WTC11 (cell line): ENCODE measurements at regions of chr15 and their contacts with region 1.

Region 1: DNA sequence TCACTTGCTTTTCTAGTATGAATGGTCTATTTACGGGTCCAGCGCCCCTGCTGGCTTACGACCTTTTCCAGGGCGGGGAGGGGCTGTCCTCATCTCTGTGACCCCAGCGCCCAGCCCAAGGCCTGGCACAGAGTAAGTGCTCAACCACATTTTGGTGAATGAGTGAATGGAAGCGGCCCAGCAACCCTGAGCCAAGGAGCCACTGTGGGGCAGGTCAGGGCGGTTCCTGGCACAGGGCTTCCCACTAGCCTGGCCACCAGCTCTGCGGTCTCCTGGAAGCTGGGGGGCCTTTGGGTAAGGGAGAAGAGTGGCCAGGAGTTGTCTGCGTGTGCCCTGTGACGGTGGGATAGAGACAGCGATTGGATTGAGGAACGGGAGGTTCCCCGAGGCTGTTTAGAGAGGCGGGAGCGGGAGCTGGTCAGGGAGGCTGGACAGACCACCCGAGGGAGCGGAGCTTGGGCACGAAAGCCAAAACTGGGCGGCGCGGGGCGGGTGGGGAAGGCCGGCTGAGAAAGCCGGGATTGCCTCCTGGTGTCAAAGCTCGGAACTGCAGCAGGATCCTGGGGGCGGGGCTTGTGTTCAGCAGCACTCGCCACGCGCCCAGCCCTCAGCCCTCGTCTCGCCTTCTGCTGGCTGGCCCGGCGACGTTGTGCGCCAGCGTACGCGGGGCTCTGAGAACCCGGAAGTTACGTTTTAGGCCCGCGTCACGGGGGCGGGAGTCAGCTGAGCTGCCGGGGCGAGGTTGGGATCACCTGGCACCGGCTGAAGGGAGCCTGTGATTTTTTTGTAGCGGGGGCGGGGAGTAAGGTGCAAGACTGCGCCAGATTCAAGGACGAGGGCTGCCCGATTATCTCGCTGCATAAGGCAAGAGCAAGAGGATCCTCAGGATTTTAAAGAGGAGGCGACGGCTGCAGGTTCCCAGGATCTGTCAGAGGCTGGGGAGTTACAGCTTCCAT is at the start of gene VPS18:
- DNase-seq: peak; percentile 99
- ATAC-seq: peak; percentile 92
- H3K4me3 Mint-ChIP-seq: peak within 1 kb of the TSS; percentile 97
- H3K27ac Mint-ChIP-seq: peak within 1 kb of the TSS; percentile 99
- H3K4me1 Mint-ChIP-seq: peaks cover 13% of the 10 kb centered on the region
- H3K27me3 Mint-ChIP-seq: peaks cover 17% of the 10 kb centered on the region
- CTCF ChIP-seq: peak; percentile 96
- total RNA-seq, gene VPS18: 22.0 to 27.3 TPM (median 24.1 TPM) in 3 replicates

Region 2: DNA sequence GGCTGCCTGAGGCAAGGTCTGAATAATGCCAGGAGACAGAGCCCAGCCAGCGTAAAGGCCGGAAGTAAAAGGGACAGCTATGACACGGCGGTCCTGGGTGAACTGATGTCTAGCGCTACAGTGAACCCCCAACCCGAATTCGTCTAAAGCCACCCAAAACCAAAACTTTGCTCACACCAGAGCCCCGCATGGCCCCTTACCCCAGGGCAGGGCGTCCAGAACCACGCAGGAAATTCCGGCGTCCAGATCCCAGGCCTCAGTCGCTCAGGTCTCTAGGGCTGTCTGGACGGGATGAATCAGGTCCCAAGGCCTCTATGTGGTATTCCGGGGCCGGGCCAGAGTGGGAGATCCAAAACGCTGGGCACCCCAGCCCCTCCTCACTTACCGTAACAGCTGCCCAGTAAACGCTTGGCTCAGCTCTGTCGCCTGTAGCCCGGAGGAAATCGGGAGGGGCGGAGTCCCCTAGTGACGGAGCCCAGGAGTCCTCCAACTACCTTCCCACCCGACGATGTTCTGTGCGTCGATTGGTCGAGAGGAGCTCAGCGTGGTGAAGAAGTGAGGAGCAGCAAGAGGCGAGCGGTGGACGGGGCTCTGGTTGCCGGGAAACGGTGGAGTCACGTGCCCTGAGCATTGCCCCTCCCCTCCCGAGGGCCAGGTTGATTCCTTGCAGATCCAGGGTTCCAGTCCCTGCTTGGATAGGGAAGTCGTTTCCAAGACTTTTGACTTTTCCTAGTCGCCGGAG is 329.2 kb before region 1 on chr15 and contains the start of gene CCDC32:
- CTCF ChIA-PET with region 1: interaction called, 15 read pairs
- POLR2A ChIA-PET with region 1: no interaction called
- DNase-seq: peak; percentile 97
- ATAC-seq: peak; percentile 98
- H3K4me3 Mint-ChIP-seq: peak within 1 kb of the TSS; percentile 89
- H3K27ac Mint-ChIP-seq: peak within 1 kb of the TSS; percentile 92
- H3K4me1 Mint-ChIP-seq: peaks cover 23% of the 10 kb centered on the region
- H3K27me3 Mint-ChIP-seq: no peaks in the 10 kb centered on the region
- CTCF ChIP-seq: no peak
- total RNA-seq, gene CCDC32: 12.8 to 15.6 TPM (median 13.7 TPM) in 3 replicates

Region 3: GRCh38 chr15:40763801-40764732 is 129.9 kb before region 1 on chr15 and contains the start of gene GCHFR:
- CTCF ChIA-PET with region 1: interaction called, 35 read pairs
- POLR2A ChIA-PET with region 1: interaction called, 9 read pairs
- DNase-seq: peak; percentile 81
- ATAC-seq: peak; percentile 40
- H3K4me3 Mint-ChIP-seq: peak within 1 kb of the TSS; percentile 81
- H3K27ac Mint-ChIP-seq: peak within 1 kb of the TSS; percentile 94
- H3K4me1 Mint-ChIP-seq: peaks cover 31% of the 10 kb centered on the region
- H3K27me3 Mint-ChIP-seq: peaks cover 14% of the 10 kb centered on the region
- CTCF ChIP-seq: no peak
- total RNA-seq, gene GCHFR: 42.3 to 63.8 TPM (median 62.9 TPM) in 3 replicates

Region 4: DNA sequence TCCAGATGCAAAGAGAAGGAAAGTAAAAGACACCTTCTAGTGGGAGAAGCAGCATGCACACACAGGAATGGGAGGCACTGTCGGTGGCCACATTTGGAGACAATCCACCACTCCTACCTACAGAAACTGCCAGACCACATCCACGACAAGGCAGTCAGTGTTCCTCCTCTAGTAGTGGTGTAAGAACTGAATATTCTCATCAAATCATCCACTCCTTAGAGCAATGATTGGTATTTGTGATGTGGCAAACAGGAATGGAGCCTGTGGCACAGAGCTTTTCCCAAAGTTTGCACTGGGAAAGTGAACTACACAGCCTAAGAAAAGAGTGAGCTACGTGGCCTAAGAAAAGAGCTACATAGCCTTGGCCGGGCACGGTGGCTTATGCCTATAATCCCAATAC is 55.2 kb before region 1 on chr15:
- CTCF ChIA-PET with region 1: interaction called, 44 read pairs
- POLR2A ChIA-PET with region 1: interaction called, 15 read pairs
- DNase-seq: no peak
- ATAC-seq: no peak
- H3K4me3 Mint-ChIP-seq: no peak overlapping the region
- H3K27ac Mint-ChIP-seq: 0 out of 2 replicates have a peak overlapping the region, but pooled peaks have one; percentile 28
- H3K4me1 Mint-ChIP-seq: peaks cover 7% of the 10 kb centered on the region
- H3K27me3 Mint-ChIP-seq: no peaks in the 10 kb centered on the region; the same call in 1 of the 2 replicates
- CTCF ChIP-seq: no peak

Region 5: GRCh38 chr15:40863660-40864270 is 30.2 kb before region 1 on chr15:
- CTCF ChIA-PET with region 1: interaction called, 500 read pairs
- POLR2A ChIA-PET with region 1: interaction called, 11 read pairs
- DNase-seq: no peak
- ATAC-seq: no peak
- H3K4me3 Mint-ChIP-seq: no peak overlapping the region
- H3K27ac Mint-ChIP-seq: no peak overlapping the region
- H3K4me1 Mint-ChIP-seq: peaks cover 9% of the 10 kb centered on the region
- H3K27me3 Mint-ChIP-seq: no peaks in the 10 kb centered on the region; the same call in 1 of the 2 replicates
- CTCF ChIP-seq: no peak

Region 6: GRCh38 chr15:40906091-40906990 is 12.3 kb after region 1 on chr15:
- CTCF ChIA-PET with region 1: interaction called, 71 read pairs
- POLR2A ChIA-PET with region 1: interaction called, 3 read pairs
- DNase-seq: peak; percentile 95
- ATAC-seq: peak; percentile 82
- H3K4me3 Mint-ChIP-seq: peak overlapping the region; percentile 62
- H3K27ac Mint-ChIP-seq: no peak overlapping the region
- H3K4me1 Mint-ChIP-seq: peaks cover 14% of the 10 kb centered on the region
- H3K27me3 Mint-ChIP-seq: no peaks in the 10 kb centered on the region
- CTCF ChIP-seq: peak; percentile 83

Region 7: GRCh38 chr15:40941528-40942336 is 47.7 kb after region 1 on chr15:
- CTCF ChIA-PET with region 1: interaction called, 22 read pairs
- POLR2A ChIA-PET with region 1: interaction called, 4 read pairs
- DNase-seq: peak; percentile 89
- ATAC-seq: peak; percentile 83
- H3K4me3 Mint-ChIP-seq: peak overlapping the region; percentile 62
- H3K27ac Mint-ChIP-seq: no peak overlapping the region
- H3K4me1 Mint-ChIP-seq: peaks cover 25% of the 10 kb centered on the region
- H3K27me3 Mint-ChIP-seq: peaks cover 36% of the 10 kb centered on the region
- CTCF ChIP-seq: peak; percentile 73